Activated CD8-positive, alpha-beta T cell treated with anti-CD3 and anti-CD28 coated beads for 36 hours (primary cell): ENCODE measurements at regions of chr6 and their contacts with region 1.

Region 1: DNA sequence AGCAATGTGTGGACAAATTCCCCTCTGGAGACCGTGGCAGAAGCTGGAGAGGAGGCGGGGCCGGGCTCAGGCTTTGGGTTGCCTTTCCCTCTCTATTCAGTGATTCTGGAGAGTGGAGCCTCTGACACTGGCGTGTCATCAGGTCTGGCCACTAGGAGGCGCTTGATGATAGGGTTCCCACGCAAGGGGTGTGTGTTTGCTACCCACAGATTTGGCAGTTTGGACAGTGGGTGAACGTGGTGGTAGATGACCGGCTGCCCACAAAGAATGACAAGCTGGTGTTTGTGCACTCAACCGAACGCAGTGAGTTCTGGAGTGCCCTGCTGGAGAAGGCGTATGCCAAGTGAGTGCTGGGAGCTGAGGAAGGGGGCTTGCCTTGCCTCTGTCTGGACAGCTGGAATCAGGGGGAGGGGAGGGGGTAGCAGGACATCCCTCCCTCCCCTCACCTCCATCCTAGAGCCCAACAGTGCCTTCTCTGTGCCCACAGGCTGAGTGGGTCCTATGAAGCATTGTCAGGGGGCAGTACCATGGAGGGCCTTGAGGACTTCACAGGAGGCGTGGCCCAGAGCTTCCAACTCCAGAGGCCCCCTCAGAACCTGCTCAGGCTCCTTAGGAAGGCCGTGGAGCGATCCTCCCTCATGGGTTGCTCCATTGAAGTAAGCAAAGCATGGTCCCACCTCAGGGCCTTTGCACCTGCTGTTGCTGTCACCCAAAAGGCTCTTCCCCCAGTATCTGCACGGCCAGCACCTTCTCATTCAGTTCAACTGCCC is 14.3 kb downstream of the CAPN11 start:
- DNase-seq: peak; percentile 90
- ATAC-seq: peak; percentile 65
- H3K4me3 Mint-ChIP-seq: no peak overlapping the region
- H3K27ac Mint-ChIP-seq: peak overlapping the region; percentile 81
- H3K4me1 Mint-ChIP-seq: peaks cover 27% of the 10 kb centered on the region
- H3K27me3 Mint-ChIP-seq: no peaks in the 10 kb centered on the region
- CTCF ChIP-seq: peak; percentile 89

Region 2: DNA sequence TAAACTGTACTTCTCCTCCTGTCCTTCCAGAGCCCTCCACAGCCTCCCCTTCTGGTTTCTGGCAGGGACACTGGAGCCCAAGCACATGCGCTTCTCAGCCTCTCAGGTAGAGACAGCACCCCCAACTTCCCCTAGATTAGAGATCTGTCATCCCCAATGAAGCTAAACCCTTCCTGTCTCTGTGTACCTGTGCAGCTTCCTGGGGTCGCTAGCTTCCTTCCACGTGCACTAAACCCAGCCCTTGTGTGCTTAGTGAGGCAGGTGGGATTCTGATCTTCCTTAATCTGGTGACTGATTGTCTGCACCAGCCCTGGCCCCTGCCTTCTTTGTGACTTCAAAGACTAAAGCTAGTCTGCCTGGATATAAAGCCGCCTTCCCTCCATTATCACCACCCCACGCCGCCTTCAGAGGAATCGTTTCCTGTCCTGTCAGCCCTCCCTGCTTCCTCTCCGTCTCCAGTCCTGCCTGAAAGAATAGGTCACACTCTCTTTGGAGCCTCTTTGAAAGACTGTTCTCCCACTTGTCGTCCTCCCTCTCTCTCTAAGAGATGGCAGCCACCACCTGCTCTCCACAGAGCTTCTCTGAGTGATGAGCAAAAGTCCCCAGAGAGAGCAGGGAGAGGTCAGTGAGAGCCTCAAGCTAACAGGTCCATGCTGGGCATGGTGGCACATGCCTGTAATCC is 13.2 kb after region 1 on chr6:
- CTCF ChIA-PET with region 1: interaction called, 26 read pairs
- POLR2A ChIA-PET with region 1: interaction called, 4 read pairs
- intact Hi-C with region 1: no loop called
- DNase-seq: no peak
- ATAC-seq: peak; percentile 71
- H3K4me3 Mint-ChIP-seq: no peak overlapping the region
- H3K27ac Mint-ChIP-seq: peak overlapping the region; percentile 75
- H3K4me1 Mint-ChIP-seq: peaks cover 17% of the 10 kb centered on the region
- H3K27me3 Mint-ChIP-seq: no peaks in the 10 kb centered on the region
- CTCF ChIP-seq: no peak

Region 3: GRCh38 chr6:44221291-44221960 is 48.5 kb after region 1 on chr6:
- CTCF ChIA-PET with region 1: interaction called, 28 read pairs
- POLR2A ChIA-PET with region 1: interaction called, 7 read pairs
- intact Hi-C with region 1: no loop called
- DNase-seq: peak; percentile 87
- ATAC-seq: peak; percentile 69
- H3K4me3 Mint-ChIP-seq: no peak overlapping the region
- H3K27ac Mint-ChIP-seq: no peak overlapping the region
- H3K4me1 Mint-ChIP-seq: peaks cover 52% of the 10 kb centered on the region
- H3K27me3 Mint-ChIP-seq: peaks cover 6% of the 10 kb centered on the region
- CTCF ChIP-seq: peak; percentile 81

Region 4: DNA sequence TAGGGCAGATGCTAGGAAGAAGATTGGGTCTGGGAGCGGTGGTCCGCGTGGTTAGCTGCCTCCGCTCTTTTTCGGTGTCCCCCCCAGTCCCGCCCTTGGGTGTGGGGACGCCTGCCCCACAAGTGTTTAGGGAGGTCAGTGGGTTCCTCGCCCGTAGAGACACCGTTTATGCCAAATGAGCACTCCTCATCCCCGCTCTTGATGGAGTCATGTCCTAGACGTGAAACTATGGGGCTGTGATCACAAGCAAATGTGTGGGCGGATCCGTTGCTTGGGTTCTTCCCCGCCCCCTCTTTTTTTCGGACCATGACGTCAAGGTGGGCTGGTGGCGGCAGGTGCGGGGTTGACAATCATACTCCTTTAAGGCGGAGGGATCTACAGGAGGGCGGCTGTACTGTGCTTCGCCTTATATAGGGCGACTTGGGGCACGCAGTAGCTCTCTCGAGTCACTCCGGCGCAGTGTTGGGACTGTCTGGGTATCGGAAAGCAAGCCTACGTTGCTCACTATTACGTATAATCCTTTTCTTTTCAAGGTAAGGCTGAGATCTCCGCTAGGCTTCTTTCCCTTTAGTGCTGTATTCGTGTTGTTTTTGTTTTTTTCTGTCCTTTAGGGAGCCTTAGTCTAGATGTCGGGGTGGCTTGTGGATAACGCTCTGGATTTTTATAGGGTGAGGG is 73.9 kb after region 1 on chr6 and contains the start of gene HSP90AB1:
- CTCF ChIA-PET with region 1: interaction called, 24 read pairs
- POLR2A ChIA-PET with region 1: interaction called, 17 read pairs
- intact Hi-C with region 1: no loop called
- DNase-seq: peak; percentile 99
- ATAC-seq: peak; percentile 85
- H3K4me3 Mint-ChIP-seq: peak within 1 kb of the TSS; percentile 100
- H3K27ac Mint-ChIP-seq: peak within 1 kb of the TSS; percentile 100
- H3K4me1 Mint-ChIP-seq: peaks cover 39% of the 10 kb centered on the region
- H3K27me3 Mint-ChIP-seq: peaks cover 3% of the 10 kb centered on the region
- CTCF ChIP-seq: no peak
- total RNA-seq, gene HSP90AB1: 2,124 to 2,130 TPM

Region 5: GRCh38 chr6:44265007-44265721 is 92.2 kb after region 1 on chr6 and contains the start of gene NFKBIE:
- CTCF ChIA-PET with region 1: interaction called, 10 read pairs
- POLR2A ChIA-PET with region 1: no interaction called
- intact Hi-C with region 1: no loop called
- DNase-seq: peak; percentile 96
- ATAC-seq: peak; percentile 70
- H3K4me3 Mint-ChIP-seq: peak within 1 kb of the TSS; percentile 95
- H3K27ac Mint-ChIP-seq: peak within 1 kb of the TSS; percentile 95
- H3K4me1 Mint-ChIP-seq: peaks cover 51% of the 10 kb centered on the region
- H3K27me3 Mint-ChIP-seq: peaks cover 16% of the 10 kb centered on the region
- CTCF ChIP-seq: peak; percentile 49
- total RNA-seq, gene NFKBIE: 13.3 to 17.9 TPM

Region 6: GRCh38 chr6:44338228-44339122 is 165.6 kb after region 1 on chr6:
- CTCF ChIA-PET with region 1: interaction called, 6 read pairs
- POLR2A ChIA-PET with region 1: no interaction called
- intact Hi-C with region 1: loop called (anchors 2 kb)
- DNase-seq: peak; percentile 83
- ATAC-seq: peak; percentile 89
- H3K4me3 Mint-ChIP-seq: no peak overlapping the region
- H3K27ac Mint-ChIP-seq: no peak overlapping the region
- H3K4me1 Mint-ChIP-seq: no peaks in the 10 kb centered on the region
- H3K27me3 Mint-ChIP-seq: peaks cover 19% of the 10 kb centered on the region
- CTCF ChIP-seq: peak; percentile 74